ENCODE measurements at regions of chr19 and their contacts with region 1.

Region 1: GRCh38 chr19:38049105-38049649 is 142.2 kb downstream of the SIPA1L3 start:
- DNase-seq: no peak
- H3K4me3 ChIP-seq: no peak overlapping the region
- H3K27ac ChIP-seq: no peak overlapping the region
- H3K4me1 ChIP-seq: no peaks in the 10 kb centered on the region
- H3K27me3 ChIP-seq: no peaks in the 10 kb centered on the region
- CTCF ChIP-seq: no peak
- POLR2A ChIP-seq: no peak

Region 2: DNA sequence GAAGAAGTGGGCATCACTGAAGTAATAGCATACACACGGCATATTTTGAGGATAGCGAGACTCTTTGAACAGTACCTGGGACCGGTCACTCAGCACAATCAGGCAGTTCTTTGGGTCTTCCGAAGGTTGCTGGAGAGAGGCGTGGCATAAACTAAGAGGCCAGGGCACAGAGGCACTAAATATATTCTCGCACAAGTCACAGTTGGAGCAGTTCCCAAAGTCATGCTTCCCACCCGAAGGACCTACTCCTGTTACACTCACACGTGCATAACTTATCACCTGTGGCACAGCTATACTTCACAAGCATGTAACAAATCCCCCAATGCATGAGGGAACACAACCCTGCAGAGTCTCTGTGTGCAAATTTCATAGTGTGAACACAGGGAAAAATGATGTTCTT is 153.0 kb before region 1 on chr19:
- CTCF ChIA-PET with region 1: interaction called, 145 read pairs
- POLR2A ChIA-PET with region 1: no interaction called
- dilution Hi-C with region 1: no loop called
- intact Hi-C with region 1: no loop called
- DNase-seq: no peak
- H3K4me3 ChIP-seq: no peak overlapping the region
- H3K27ac ChIP-seq: no peak overlapping the region
- H3K4me1 ChIP-seq: no peaks in the 10 kb centered on the region
- H3K27me3 ChIP-seq: peaks cover 0 to 2% of the 10 kb centered on the region in 2 experiments
- CTCF ChIP-seq: no peak
- POLR2A ChIP-seq: no peak

Region 3: DNA sequence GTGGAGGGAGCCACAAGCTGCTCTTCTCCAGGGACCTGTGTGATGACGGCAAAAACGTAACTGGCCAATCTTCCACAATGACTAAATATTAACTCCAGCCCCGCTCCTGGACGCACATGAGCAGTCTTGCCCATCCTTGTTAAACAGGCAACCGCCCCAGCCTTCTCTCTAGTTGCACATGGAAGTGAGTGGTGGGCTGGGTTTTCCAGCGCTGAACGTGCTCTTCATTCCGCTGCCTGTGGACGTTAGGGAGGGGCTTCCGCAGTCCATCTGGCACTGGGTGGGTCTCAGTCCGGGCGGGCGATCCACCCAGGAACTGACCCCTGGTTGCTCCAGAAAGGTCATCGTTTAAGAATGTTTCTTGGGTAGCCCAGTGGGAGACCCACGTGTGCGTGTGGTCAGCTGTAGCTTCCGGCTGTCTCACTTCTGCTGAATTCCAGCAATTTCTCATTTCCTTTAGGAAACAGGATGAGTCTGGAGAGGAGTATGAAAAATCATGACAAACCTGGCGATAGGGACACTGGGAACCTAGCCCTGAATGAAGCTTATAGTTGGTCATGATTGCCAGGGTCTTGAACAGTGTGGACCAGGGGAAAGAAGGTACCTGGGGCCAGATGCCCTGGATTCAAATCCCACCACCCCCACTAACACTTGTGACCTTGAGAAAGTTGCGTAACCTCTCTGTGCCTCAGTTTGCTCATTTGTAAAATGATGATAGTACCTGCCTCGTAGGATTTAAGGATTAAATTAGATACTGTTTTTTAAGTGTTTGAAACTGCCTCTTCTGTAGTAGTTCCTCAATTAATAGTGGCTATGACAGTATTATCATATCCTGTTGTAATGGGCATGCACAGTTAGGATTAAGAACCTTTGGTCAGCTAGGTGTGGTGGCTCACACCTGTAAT is 49.6 kb before region 1 on chr19:
- CTCF ChIA-PET with region 1: interaction called, 22 read pairs
- POLR2A ChIA-PET with region 1: no interaction called
- dilution Hi-C with region 1: no loop called
- intact Hi-C with region 1: loop called (anchors 1 kb)
- DNase-seq: peak; percentile 89
- H3K4me3 ChIP-seq: no peak overlapping the region
- H3K27ac ChIP-seq: peak overlapping the region; percentile 93
- H3K4me1 ChIP-seq: peaks cover 52% of the 10 kb centered on the region
- H3K27me3 ChIP-seq: no peaks in the 10 kb centered on the region
- CTCF ChIP-seq: no peak
- POLR2A ChIP-seq: no peak